ENCODE measurements at regions of chr1 and their contacts with region 1.

Region 1: DNA sequence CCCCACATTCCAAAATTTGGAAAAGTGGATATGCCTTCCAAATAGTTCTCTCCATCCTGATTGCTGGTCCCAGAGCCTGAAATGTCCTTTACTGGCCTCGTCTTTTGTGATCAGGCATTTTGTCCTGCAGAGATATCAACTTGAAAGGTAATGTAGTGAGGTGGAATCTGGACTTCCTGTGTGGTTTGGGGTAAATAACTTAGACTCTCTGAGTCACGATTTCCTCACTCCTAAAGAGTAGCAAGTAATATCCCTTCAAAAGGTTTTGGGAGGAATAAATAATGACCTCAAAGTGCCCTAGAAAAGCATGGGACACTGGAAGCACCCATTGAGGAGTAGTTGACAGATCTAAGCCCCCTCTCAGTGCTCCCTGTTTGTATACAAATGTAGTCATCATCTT is 426.6 kb downstream of the OMA1 start:
- DNase-seq: no peak
- ATAC-seq: no peak
- H3K4me3 ChIP-seq: no peak overlapping the region
- H3K27ac ChIP-seq: no peak overlapping the region
- H3K4me1 ChIP-seq: no peaks in the 10 kb centered on the region
- H3K27me3 ChIP-seq: no peaks in the 10 kb centered on the region
- CTCF ChIP-seq: no peak

Region 2: GRCh38 chr1:57576756-57577155 is 543.2 kb before region 1 on chr1:
- intact Hi-C with region 1: loop called (anchors 10 kb)
- DNase-seq: no peak
- ATAC-seq: peak; percentile 41
- H3K4me3 ChIP-seq: no peak overlapping the region
- H3K27ac ChIP-seq: no peak overlapping the region
- H3K4me1 ChIP-seq: no peaks in the 10 kb centered on the region
- H3K27me3 ChIP-seq: no peaks in the 10 kb centered on the region
- CTCF ChIP-seq: no peak